Tibial artery (tissue), 4 donors: ENCODE measurements at regions of chr17 and their contacts with region 1.

Region 1: DNA sequence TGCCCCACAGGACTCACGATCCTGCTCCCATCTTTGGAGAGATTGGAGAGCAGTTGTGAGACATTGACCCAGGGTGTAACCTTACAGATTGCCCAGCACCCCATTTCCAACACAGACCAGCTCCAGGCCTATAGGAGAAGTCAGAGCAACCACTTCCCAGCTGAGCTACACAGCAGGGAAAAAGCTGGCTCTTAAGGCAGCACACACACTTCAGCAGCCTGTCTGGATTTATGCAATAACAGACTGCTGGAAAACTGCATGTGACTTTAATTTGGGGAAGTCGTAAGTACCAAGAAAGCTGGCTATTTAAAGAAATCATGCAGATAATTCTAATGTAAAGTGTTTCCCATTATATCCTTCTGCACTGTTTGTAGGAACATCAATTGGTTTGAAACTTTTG is 30.8 kb downstream of the NOG start:
- DNase-seq: no peak
- H3K4me3 ChIP-seq: no peak overlapping the region
- H3K27ac ChIP-seq: no peak overlapping the region
- H3K4me1 ChIP-seq: no peaks in the 10 kb centered on the region
- H3K27me3 ChIP-seq: no peaks in the 10 kb centered on the region
- CTCF ChIP-seq: no peak

Region 2: GRCh38 chr17:56653877-56654276 is 29.6 kb after region 1 on chr17:
- intact Hi-C with region 1: no loop called
- DNase-seq: no peak
- H3K4me3 ChIP-seq: no peak overlapping the region
- H3K27ac ChIP-seq: no peak overlapping the region
- H3K4me1 ChIP-seq: no peaks in the 10 kb centered on the region
- H3K27me3 ChIP-seq: peaks cover 0 to 21% of the 10 kb centered on the region in 2 donors
- CTCF ChIP-seq: no peak

Region 3: DNA sequence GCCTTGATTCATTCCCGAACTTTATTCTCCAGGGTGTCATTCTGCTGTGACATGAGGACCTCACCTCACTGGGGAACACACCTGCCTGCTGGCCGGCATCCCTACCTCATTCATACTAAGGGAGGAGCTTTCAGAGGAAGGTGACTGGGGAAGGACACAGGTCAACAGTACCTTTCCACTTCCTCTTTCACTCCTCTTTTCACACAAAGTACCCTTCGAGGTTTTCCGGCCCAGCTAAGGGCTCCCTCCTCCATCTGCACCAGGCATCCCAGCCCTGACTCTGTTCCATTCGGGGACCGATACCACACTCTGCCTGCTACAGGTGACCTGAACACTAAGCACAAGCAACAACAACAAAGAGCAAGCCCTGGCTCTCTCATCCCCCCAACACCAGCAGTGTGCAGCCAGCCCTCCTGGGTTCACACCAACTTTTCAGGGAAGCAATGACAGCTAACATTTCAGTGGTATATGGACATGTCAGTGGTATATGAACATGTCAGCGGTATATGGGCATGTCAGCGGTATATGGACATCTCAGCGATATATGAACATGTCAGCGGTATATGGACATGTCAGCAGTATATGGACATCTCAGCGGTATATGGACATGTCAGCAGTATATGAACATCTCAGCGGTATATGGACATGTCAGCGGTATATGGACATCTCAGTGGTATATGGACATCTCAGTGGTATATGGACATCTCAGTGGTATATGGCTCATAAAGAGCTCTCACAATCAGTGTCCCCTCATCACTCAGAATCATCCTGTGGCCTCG is 273.5 kb after region 1 on chr17:
- intact Hi-C with region 1: no loop called
- DNase-seq: peak in 1 of 2 donors; percentile 10
- H3K4me3 ChIP-seq: no peak overlapping the region
- H3K27ac ChIP-seq: no peak overlapping the region
- H3K4me1 ChIP-seq: no peaks in the 10 kb centered on the region
- H3K27me3 ChIP-seq: no peaks in the 10 kb centered on the region
- CTCF ChIP-seq: no peak

Region 4: GRCh38 chr17:56948491-56948890 is 324.2 kb after region 1 on chr17:
- intact Hi-C with region 1: loop called (anchors 5 kb)
- DNase-seq: no peak
- H3K4me3 ChIP-seq: no peak overlapping the region
- H3K27ac ChIP-seq: no peak overlapping the region
- H3K4me1 ChIP-seq: no peaks in the 10 kb centered on the region
- H3K27me3 ChIP-seq: no peaks in the 10 kb centered on the region
- CTCF ChIP-seq: no peak